ENCODE measurements at regions of chr10 and their contacts with region 1.

Region 1: GRCh38 chr10:88835096-88835909 is 16.3 kb downstream of the ANKRD22 start:
- DNase-seq: peak; percentile 85
- ATAC-seq: peak; percentile 93 to 96

Region 2: DNA sequence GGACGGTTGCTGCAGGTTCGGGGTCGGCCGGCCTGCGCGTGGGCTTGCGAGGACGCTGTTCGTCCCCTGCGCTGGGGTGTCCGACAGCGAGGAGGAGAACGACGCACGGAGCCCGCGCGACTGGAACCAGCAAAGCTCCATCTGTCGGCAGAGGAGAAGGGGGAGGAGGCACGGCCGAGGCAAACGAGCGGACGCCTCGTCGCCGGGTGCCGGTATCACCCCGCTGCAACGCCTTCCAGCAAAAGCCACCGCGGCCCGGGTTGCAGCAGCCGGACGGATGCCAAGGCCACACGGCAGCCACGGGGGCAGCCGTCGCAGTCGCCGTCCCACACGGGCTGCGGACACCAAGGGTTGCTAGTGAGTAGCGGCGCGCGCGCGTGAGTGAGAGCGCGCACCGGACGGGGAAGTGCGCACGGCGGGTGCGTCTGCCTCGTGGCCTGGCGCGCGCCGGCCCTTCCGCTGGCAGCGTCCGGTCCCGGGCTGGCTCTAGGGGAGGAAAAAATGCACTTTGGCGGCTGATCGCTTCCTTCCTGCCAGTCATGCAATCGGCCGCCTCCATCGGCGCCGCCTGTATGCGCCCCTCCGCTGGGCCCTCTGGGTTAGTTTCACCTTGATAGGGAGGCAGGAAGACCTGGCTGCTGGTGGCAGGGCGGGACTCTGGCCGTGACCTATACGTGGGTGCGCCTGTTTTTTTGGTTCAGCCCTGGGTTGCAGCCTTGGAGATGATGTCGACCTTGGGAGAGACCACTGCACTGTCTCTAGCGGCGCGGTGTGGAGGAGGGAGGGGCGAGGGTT is 45.2 kb after region 1 on chr10:
- intact Hi-C with region 1: loop called in 1 of 2 experiments (anchors 5 kb)
- DNase-seq: peak; percentile 89
- ATAC-seq: peak; percentile 97 to 98

Region 3: GRCh38 chr10:88932539-88933256 is 97.4 kb after region 1 on chr10:
- intact Hi-C with region 1: loop called (anchors 1 to 2 kb)
- DNase-seq: peak; percentile 40
- ATAC-seq: peak; percentile 72 to 78

Region 4: GRCh38 chr10:88990384-88991160 is 155.3 kb after region 1 on chr10 and contains the start of gene FAS:
- intact Hi-C with region 1: loop called (anchors 5 kb)
- DNase-seq: peak; percentile 76
- ATAC-seq: peak; percentile 79 to 90
- total RNA-seq, gene FAS: 6.6 to 8.1 TPM

Region 5: GRCh38 chr10:89207181-89207800 is 372.0 kb after region 1 on chr10 and contains the start of gene CH25H:
- intact Hi-C with region 1: loop called in 1 of 2 experiments (anchors 10 kb)
- DNase-seq: peak; percentile 89
- ATAC-seq: peak; percentile 90 to 95
- total RNA-seq, gene CH25H: 0.44 to 1.2 TPM

Region 6: GRCh38 chr10:89217057-89217990 is 382.0 kb after region 1 on chr10:
- intact Hi-C with region 1: loop called in 1 of 2 experiments (anchors 5 kb)
- DNase-seq: peak; percentile 56
- ATAC-seq: peak; percentile 39 to 45

Measured in left cardiac atrium (tissue), 4 donors.